ENCODE measurements at regions of chr10 and their contacts with region 1.

Region 1: DNA sequence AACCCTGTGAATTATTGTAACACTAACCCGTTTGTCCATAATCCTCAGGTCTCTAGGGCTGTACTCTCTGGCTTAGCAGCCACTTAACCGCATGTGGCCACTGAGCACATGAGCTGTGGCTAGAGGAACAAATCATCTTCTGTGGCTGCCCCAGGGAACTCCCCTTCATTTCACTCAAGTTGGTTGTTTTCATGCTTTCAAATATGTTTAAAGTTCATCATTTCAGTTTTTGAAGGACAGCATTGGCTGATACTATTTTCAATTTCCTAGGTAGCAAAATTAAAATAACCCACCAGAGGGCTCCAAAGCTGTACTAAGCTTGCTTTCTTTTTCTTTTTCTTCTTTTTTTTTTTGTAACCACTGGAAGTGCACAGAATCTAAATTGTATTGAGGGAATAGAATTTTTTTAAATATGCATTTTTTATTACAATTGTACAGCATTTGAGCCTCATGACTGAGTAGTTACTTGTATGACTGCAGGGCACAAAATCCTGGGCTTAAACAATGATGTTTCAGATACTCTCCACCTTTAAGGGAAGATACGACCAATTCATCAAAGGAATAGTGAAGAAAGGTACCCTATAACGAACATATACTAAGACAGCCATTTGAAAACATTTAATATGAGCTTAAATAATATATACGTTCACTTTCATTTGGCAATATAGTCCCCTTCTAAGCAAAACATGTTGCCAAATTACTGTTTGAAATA is 38.6 kb downstream of the MRC1 start:
- DNase-seq: peak; percentile 30
- ATAC-seq: no peak
- H3K4me3 ChIP-seq: no peak overlapping the region
- H3K27ac ChIP-seq: no peak overlapping the region
- H3K4me1 ChIP-seq: no peaks in the 10 kb centered on the region
- H3K27me3 ChIP-seq: no peaks in the 10 kb centered on the region
- CTCF ChIP-seq: peak; percentile 49; the same call in 1 of the 2 replicates

Region 2: DNA sequence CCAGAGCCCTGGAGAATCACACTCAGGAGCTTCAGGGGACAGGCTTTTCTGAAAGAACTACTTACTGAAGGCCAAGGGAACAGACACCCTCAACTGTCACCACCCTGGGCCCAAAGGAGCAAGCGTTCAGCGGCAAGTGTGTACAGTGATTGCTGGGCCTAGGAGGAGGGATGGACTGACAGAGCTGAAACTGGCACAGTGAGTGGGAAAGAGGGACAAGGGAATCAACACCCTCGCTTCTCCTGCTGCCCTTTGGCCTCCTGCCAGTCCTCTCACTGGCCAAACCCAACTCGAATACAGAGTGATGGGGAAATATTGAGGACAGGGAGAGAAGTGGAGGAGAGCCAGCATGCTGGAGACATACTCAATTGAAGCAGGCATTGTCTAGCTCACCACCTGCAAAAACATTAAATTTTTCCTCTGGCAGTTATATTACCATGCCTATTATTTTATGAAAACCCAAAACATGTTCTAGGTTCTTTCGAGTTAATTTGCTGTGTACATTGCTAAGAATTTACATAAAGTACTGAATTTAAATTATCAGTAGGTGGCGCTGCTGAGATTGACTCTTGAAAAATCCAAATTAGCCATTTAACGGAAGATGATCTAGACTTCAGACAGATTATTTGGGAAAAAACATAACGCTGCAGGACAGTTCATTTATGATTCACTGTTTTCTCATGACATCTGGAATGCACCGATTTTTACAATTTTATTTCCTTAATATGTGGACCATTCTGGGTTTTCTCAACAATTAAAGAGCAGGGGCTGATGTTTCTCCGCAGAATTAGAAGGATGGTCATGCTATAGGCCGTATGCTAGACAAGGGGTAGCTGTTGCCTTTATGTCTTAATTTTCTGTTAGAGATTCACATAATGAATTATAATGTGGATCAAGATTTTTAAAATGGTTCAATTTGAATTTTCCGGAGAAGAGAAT is 110.4 kb before region 1 on chr10:
- CTCF ChIA-PET with region 1: no interaction called
- POLR2A ChIA-PET with region 1: no interaction called
- intact Hi-C with region 1: loop called (anchors 5 kb)
- DNase-seq: peak; percentile 44
- ATAC-seq: no peak; the same call in 1 of the 2 replicates
- H3K4me3 ChIP-seq: no peak overlapping the region
- H3K27ac ChIP-seq: no peak overlapping the region
- H3K4me1 ChIP-seq: no peaks in the 10 kb centered on the region
- H3K27me3 ChIP-seq: no peaks in the 10 kb centered on the region
- CTCF ChIP-seq: peak; percentile 61

Region 3: GRCh38 chr10:17811146-17811865 is 36.4 kb before region 1 on chr10:
- CTCF ChIA-PET with region 1: no interaction called
- POLR2A ChIA-PET with region 1: no interaction called
- intact Hi-C with region 1: no loop called
- DNase-seq: no peak
- ATAC-seq: no peak
- H3K4me3 ChIP-seq: no peak overlapping the region
- H3K27ac ChIP-seq: no peak overlapping the region
- H3K4me1 ChIP-seq: no peaks in the 10 kb centered on the region
- H3K27me3 ChIP-seq: no peaks in the 10 kb centered on the region
- CTCF ChIP-seq: no peak

Region 4: DNA sequence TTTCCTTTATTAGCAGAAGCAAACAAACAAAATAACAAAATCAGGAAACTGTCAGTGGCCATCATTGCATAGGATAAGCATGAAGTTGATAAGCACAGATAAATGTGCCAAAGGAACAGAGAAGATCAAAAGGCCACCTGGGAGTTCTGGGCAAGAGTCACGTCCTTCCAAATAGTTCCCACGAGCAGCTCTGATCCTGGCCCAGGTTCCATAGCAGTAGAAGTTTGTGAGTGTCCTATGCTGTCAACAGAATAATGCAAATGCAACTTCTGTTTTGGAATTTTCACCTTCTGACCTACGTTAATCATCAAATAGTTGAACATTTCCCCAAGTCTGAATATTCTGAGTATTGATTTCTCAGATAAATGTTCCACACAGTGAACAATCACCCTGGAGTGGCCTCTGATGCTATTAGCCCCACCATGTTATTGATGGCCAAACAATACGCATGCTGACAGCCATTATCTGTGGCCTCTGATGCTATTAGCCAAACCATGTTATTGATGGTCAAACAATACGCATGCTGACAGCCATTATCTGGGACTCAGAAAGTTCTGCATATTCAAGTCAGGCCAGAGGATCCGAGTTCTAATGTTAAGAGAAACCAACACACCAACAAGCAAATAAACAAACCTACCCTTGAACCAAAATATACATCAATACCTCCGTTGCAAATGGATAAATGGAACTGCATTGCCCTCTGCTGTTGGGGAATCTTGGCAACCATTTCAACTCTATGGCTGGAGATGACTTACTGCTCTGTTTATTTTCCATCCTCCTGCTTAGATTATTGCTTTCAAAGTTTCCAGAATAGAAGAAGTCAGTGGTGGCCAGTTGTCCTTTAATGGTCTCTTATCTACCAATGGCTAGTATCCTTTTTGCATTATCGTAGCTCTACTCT is 24.7 kb after region 1 on chr10:
- CTCF ChIA-PET with region 1: no interaction called
- POLR2A ChIA-PET with region 1: interaction called, 7 read pairs
- intact Hi-C with region 1: loop called (anchors 1 kb)
- DNase-seq: peak; percentile 44
- ATAC-seq: 0 out of 2 replicates have a peak, but pooled peaks have one; percentile 40
- H3K4me3 ChIP-seq: no peak overlapping the region
- H3K27ac ChIP-seq: no peak overlapping the region
- H3K4me1 ChIP-seq: no peaks in the 10 kb centered on the region
- H3K27me3 ChIP-seq: no peaks in the 10 kb centered on the region
- CTCF ChIP-seq: peak; percentile 59

Region 5: GRCh38 chr10:18214691-18215563 is 367.2 kb after region 1 on chr10:
- CTCF ChIA-PET with region 1: no interaction called
- POLR2A ChIA-PET with region 1: no interaction called
- intact Hi-C with region 1: loop called (anchors 5 kb)
- DNase-seq: peak; percentile 50
- ATAC-seq: peak; percentile 46; the same call in 1 of the 2 replicates
- H3K4me3 ChIP-seq: no peak overlapping the region
- H3K27ac ChIP-seq: no peak overlapping the region
- H3K4me1 ChIP-seq: no peaks in the 10 kb centered on the region
- H3K27me3 ChIP-seq: no peaks in the 10 kb centered on the region
- CTCF ChIP-seq: peak; percentile 73